ENCODE measurements at regions of chr10 and their contacts with region 1.

Region 1: DNA sequence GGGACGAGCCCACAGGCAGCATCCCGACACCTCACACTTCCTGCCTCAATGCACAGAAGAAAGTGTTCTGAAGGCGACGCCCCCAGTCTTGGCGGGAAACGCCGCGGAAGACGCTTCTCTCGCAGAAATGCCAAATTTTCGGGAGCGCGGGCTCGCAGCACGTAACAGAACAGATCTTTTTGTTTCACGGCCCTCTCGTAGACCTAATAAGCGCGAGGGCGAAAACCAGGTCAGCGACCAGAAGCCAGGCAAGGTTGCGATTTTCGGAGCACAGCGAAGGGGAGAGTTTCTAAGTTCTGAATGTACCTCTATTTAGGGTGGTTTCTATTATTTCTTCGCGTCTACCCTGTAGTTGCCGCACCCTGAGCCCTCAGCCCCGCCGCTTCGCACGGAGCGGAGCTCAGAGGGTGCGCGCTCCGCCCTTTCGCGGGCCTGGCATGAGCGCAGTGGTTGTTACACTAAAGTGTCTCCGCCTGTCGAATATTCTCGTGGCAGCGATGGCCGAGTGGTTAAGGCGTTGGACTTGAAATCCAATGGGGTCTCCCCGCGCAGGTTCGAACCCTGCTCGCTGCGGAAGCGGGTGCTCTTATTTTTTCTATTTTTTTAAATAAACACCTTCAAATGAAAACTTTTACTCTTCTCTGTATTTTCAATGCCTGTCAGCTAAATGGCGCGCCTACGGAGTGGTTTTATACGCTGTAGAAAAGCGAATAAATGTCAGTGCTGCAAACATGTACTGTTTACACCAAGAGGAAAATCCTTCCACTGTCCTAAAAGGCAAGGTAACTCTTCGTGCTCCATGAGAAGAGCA is 68.2 kb upstream of the CTNNA3 start:
- DNase-seq: peak; percentile 94 to 100 (median 97)
- ATAC-seq: peak; percentile 80
- H3K4me3 ChIP-seq: peak overlapping the region; percentile 86
- H3K4me3 Mint-ChIP-seq: peak overlapping the region; percentile 95
- H3K27ac ChIP-seq: peak overlapping the region; percentile 88 to 91
- H3K27ac Mint-ChIP-seq: peak overlapping the region; percentile 100
- H3K4me1 ChIP-seq: peaks cover 10% of the 10 kb centered on the region
- H3K4me1 Mint-ChIP-seq: peaks cover 27% of the 10 kb centered on the region
- H3K27me3 ChIP-seq: no peaks in the 10 kb centered on the region
- H3K27me3 Mint-ChIP-seq: peaks cover 17% of the 10 kb centered on the region
- CTCF ChIP-seq: no peak

Region 2: GRCh38 chr10:67697724-67698131 is 66.5 kb before region 1 on chr10:
- CTCF ChIA-PET with region 1: interaction called, 11 read pairs
- POLR2A ChIA-PET with region 1: interaction called, 27 read pairs
- intact Hi-C with region 1: loop called in 1 of 2 experiments (anchors 5 kb)
- DNase-seq: peak in 9 of 14 experiments; percentile 2 to 75 (median 10)
- ATAC-seq: peak; percentile 90
- H3K4me3 ChIP-seq: no peak overlapping the region
- H3K4me3 Mint-ChIP-seq: no peak overlapping the region
- H3K27ac ChIP-seq: no peak overlapping the region
- H3K27ac Mint-ChIP-seq: no peak overlapping the region
- H3K4me1 ChIP-seq: peaks cover 6% of the 10 kb centered on the region
- H3K4me1 Mint-ChIP-seq: peaks cover 15% of the 10 kb centered on the region
- H3K27me3 ChIP-seq: no peaks in the 10 kb centered on the region
- H3K27me3 Mint-ChIP-seq: peaks cover 39% of the 10 kb centered on the region
- CTCF ChIP-seq: peak; percentile 73

Region 3: DNA sequence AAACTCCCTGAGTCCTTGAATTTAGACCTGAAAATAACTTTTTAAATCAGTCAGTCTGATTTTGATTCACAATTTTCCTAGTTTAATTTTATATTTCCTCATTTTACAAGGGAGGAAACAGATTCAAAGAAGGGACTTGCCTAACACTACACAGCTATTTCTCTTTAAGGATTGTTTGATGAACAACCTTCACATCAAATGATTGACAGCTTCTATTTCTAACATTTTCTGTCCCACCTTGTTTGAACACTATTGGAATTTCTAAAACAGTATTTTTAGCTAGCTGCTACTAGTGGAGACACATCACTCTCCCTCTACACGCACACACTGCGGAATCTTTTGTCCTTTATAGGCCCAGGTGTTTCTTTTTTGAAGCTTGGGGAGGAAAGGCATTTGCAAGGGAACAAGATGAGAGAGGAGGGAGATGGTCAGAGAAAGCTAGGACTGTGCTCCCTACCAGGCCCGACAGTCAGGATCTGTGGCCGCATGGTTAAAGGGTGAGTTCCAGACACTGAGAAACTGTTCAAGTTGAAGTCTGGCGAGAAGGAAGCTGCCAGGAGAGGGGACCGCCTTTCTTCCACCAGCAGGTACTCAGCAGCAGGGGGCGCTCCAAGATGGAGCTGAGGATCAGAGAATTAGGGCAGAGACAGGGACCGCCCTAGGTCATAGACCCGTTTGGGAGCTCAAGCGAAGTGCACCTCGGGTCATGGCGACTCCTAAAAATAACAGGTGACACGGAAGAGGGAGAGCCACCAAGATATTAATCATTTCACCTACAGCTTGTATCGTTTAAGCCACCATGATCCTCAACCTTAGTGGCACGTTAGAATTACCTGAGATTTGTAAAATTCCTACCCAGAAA is 24.0 kb after region 1 on chr10:
- CTCF ChIA-PET with region 1: interaction called, 5 read pairs
- POLR2A ChIA-PET with region 1: interaction called, 11 read pairs
- intact Hi-C with region 1: no loop called
- DNase-seq: peak; percentile 52 to 79 (median 62)
- ATAC-seq: peak; percentile 73
- H3K4me3 ChIP-seq: no peak overlapping the region
- H3K4me3 Mint-ChIP-seq: no peak overlapping the region
- H3K27ac ChIP-seq: no peak overlapping the region
- H3K27ac Mint-ChIP-seq: no peak overlapping the region
- H3K4me1 ChIP-seq: peaks cover 30% of the 10 kb centered on the region
- H3K4me1 Mint-ChIP-seq: peaks cover 30% of the 10 kb centered on the region
- H3K27me3 ChIP-seq: no peaks in the 10 kb centered on the region
- H3K27me3 Mint-ChIP-seq: no peaks in the 10 kb centered on the region
- CTCF ChIP-seq: peak; percentile 57

Region 4: GRCh38 chr10:67884313-67884841 is 120.2 kb after region 1 on chr10 and contains the start of gene SIRT1:
- CTCF ChIA-PET with region 1: no interaction called
- POLR2A ChIA-PET with region 1: interaction called, 21 read pairs
- intact Hi-C with region 1: loop called in 1 of 2 experiments (anchors 10 kb)
- DNase-seq: peak; percentile 88 to 97 (median 92)
- ATAC-seq: peak; percentile 70
- H3K4me3 ChIP-seq: peak within 1 kb of the TSS; percentile 87
- H3K4me3 Mint-ChIP-seq: peak within 1 kb of the TSS; percentile 95
- H3K27ac ChIP-seq: peak within 1 kb of the TSS; percentile 78 to 82
- H3K27ac Mint-ChIP-seq: peak within 1 kb of the TSS; percentile 91
- H3K4me1 ChIP-seq: peaks cover 24% of the 10 kb centered on the region
- H3K4me1 Mint-ChIP-seq: peaks cover 46% of the 10 kb centered on the region
- H3K27me3 ChIP-seq: no peaks in the 10 kb centered on the region
- H3K27me3 Mint-ChIP-seq: no peaks in the 10 kb centered on the region
- CTCF ChIP-seq: no peak
- total RNA-seq, gene SIRT1: 57.6 to 62.9 TPM

Region 5: DNA sequence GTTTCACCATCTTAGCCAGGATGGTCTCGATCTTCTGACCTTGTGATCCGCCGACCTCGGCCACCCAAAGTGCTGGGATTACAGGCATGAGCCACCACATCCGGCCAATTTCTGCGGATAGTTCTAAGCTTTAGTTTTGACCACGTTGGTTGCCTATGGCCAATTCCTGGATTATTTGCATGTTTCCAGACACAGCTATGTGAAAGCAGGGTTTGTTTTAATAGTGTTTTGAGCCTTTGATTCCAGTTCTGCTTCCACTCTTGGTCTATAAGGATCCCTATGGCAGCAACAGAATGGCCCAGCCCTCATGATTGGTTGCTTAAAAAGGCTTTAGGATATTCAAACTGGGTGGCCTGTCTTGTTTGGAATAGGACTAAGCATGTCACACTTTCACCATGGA is 139.4 kb after region 1 on chr10:
- CTCF ChIA-PET with region 1: no interaction called
- POLR2A ChIA-PET with region 1: no interaction called
- intact Hi-C with region 1: no loop called
- DNase-seq: no peak
- ATAC-seq: no peak
- H3K4me3 ChIP-seq: no peak overlapping the region
- H3K4me3 Mint-ChIP-seq: no peak overlapping the region
- H3K27ac ChIP-seq: no peak overlapping the region
- H3K27ac Mint-ChIP-seq: no peak overlapping the region
- H3K4me1 ChIP-seq: peaks cover 3% of the 10 kb centered on the region
- H3K4me1 Mint-ChIP-seq: peaks cover 22% of the 10 kb centered on the region
- H3K27me3 ChIP-seq: no peaks in the 10 kb centered on the region
- H3K27me3 Mint-ChIP-seq: no peaks in the 10 kb centered on the region
- CTCF ChIP-seq: no peak

Region 6: GRCh38 chr10:68331455-68332258 is 567.4 kb after region 1 on chr10 and contains the start of gene HNRNPH3:
- CTCF ChIA-PET with region 1: interaction called, 3 read pairs
- POLR2A ChIA-PET with region 1: interaction called, 13 read pairs
- intact Hi-C with region 1: no loop called
- DNase-seq: peak; percentile 97 to 100 (median 98)
- ATAC-seq: peak; percentile 78
- H3K4me3 ChIP-seq: peak within 1 kb of the TSS; percentile 95
- H3K4me3 Mint-ChIP-seq: peak within 1 kb of the TSS; percentile 100
- H3K27ac ChIP-seq: peak within 1 kb of the TSS; percentile 94 to 97
- H3K27ac Mint-ChIP-seq: peak within 1 kb of the TSS; percentile 98
- H3K4me1 ChIP-seq: peaks cover 18% of the 10 kb centered on the region
- H3K4me1 Mint-ChIP-seq: peaks cover 52% of the 10 kb centered on the region
- H3K27me3 ChIP-seq: no peaks in the 10 kb centered on the region
- H3K27me3 Mint-ChIP-seq: no peaks in the 10 kb centered on the region
- CTCF ChIP-seq: no peak
- total RNA-seq, gene HNRNPH3: 227 to 228 TPM

Region 7: GRCh38 chr10:69639291-69640195 is 1875.3 kb after region 1 on chr10:
- CTCF ChIA-PET with region 1: no interaction called
- POLR2A ChIA-PET with region 1: no interaction called
- intact Hi-C with region 1: loop called in 1 of 2 experiments (anchors 10 kb)
- DNase-seq: peak; percentile 57 to 87 (median 66)
- ATAC-seq: peak; percentile 81
- H3K4me3 ChIP-seq: no peak overlapping the region
- H3K4me3 Mint-ChIP-seq: no peak overlapping the region
- H3K27ac ChIP-seq: no peak overlapping the region
- H3K27ac Mint-ChIP-seq: no peak overlapping the region
- H3K4me1 ChIP-seq: no peaks in the 10 kb centered on the region
- H3K4me1 Mint-ChIP-seq: no peaks in the 10 kb centered on the region
- H3K27me3 ChIP-seq: no peaks in the 10 kb centered on the region
- H3K27me3 Mint-ChIP-seq: no peaks in the 10 kb centered on the region
- CTCF ChIP-seq: peak; percentile 88